GM18951 (cell line): ENCODE measurements at regions of chr16 and their contacts with region 1.

Region 1: GRCh38 chr16:69150146-69150865 is 17.9 kb downstream of the UTP4 start:
- POLR2A ChIP-seq: no peak

Region 2: GRCh38 chr16:69260019-69260418 is 109.7 kb after region 1 on chr16:
- in situ Hi-C with region 1: loop called (anchors 10 kb)
- POLR2A ChIP-seq: no peak

Region 3: DNA sequence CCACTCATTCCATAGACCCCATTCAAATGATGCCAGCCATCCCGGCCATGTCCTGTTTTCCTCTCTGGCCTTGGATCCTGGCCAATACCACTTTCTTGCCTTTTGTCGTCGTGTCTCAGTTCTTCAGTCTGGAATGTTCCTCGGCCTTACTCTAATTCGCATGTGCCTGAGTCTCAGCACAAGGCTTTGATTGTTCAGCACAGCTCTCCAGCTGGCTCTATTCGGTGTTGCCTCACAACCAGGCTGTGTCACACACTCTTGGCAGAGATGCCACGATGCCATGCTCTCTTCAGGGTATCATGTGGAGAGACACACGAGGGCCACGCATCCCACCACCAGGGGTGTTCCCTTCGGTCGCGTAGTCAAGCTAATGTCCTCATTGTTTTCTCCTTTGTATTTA is 159.0 kb after region 1 on chr16:
- in situ Hi-C with region 1: loop called (anchors 10 kb)
- POLR2A ChIP-seq: no peak